Vagina (tissue), 2 donors: ENCODE measurements at regions of chr1 and their contacts with region 1.

Region 1: GRCh38 chr1:19450811-19451515 is 34.4 kb downstream of the CAPZB start:
- DNase-seq: no peak
- H3K4me3 ChIP-seq: no peak overlapping the region
- H3K27ac ChIP-seq: peak overlapping the region; percentile 86
- H3K4me1 ChIP-seq: peaks cover 96% of the 10 kb centered on the region
- H3K27me3 ChIP-seq: no peaks in the 10 kb centered on the region
- CTCF ChIP-seq: no peak
- POLR2A ChIP-seq: no peak

Region 2: DNA sequence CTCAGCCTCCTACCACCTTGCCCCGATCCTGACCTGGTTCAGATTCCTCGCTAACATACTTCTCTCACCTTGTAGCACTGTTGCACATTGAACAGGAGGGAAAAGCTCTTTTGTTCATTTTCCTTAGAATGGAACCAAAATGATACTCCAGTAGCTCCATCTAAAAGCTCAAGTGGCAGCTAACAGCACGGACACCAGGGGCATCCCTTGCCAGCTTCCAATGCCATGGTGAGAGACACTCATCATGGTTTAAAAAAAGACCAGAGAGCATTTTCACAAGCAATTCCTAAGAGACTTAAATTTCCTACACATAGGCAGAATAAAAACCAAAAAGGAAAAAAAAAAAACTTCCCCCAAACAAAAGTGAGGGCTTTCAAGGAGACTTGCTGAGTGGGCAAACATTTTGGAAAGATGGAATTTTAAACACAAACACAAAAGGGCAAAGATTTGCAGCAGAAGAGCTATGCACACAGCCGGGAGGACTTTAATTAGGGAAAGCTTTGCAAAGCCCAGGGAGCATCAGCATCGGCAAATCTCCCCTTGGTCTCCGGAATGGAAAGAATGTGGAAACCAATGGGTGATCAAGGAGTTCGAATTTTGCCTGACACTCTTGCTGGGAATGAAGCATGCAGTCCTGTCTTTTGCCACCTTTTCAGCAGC is 50.0 kb before region 1 on chr1:
- intact Hi-C with region 1: loop called (anchors 5 kb)
- DNase-seq: no peak
- H3K4me3 ChIP-seq: no peak overlapping the region
- H3K27ac ChIP-seq: peak overlapping the region; percentile 78
- H3K4me1 ChIP-seq: peaks cover 82% of the 10 kb centered on the region
- H3K27me3 ChIP-seq: no peaks in the 10 kb centered on the region
- CTCF ChIP-seq: no peak
- POLR2A ChIP-seq: no peak

Region 3: DNA sequence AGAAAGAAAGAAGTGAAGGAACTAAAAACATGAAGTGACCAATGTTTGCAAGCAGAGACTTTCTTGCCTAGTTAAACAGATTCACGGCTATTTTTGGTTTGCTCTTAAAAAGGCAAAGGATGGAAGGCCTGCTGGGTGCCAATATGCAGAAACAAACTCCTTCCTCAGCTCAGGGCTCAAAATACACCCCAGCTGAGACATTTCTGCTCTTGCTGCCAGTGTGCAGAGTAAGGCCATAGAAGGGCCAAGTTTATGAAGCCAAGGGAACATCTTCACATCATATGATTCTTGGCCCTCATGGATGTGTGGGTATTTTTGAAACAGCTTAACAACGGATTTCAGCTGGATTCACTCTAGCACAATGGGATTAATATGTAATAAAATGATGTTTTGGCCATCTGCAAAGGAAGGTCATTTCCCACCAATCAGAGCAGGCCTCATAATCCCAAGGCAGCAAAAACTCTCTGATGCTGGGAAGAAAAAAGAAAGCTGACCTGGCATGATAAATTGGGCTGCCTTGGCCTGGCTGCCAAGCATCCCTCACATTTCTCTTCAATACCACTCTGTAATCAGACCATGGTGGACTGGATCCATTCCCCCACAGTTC is 36.3 kb before region 1 on chr1:
- intact Hi-C with region 1: no loop called
- DNase-seq: no peak
- H3K4me3 ChIP-seq: no peak overlapping the region
- H3K27ac ChIP-seq: peak overlapping the region; percentile 91
- H3K4me1 ChIP-seq: peaks cover 89% of the 10 kb centered on the region
- H3K27me3 ChIP-seq: no peaks in the 10 kb centered on the region
- CTCF ChIP-seq: no peak
- POLR2A ChIP-seq: no peak

Region 4: DNA sequence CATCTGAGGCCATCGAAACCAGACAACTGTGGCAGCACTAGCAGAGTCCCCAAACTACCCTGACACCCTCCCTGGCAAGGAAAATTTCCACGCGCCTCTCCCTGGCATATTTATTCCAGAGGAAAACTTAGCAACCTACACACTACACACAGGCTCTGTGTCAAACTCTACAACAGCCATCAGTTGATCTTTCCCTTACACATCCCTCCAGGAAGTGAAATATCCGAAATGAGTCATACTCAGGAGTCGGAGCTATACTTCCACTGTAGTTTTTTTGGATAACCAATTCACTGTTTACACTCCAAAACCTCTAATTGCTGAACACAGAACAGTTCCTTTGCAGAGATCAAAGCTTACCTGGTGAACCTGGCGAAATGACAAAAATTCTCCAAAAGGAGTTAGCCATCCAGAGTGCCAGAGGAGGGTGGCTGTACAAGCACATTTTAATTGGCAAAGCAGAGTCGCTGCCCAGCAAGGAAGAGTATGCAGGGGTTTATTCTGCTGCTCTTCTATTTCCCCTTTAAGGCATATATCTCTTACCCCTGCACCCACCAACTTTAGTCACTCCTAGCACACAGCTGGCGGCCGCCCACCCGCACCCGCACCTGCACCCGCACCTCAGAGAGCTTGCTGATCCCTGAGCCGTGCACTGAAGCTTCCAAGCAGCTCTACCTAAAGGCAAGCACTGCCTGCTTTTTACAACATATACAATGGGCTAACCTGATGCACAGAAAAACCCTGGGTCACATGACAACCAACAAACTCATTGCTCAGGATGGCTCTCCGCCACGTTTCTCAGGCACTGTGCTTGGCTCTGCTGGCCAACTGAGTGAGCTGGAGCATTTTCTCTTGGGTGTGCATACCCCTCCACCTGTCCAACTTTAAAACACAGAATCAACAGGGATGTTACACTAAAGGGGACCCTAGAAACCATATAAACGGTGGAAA is 20.6 kb before region 1 on chr1:
- intact Hi-C with region 1: no loop called
- DNase-seq: no peak
- H3K4me3 ChIP-seq: no peak overlapping the region
- H3K27ac ChIP-seq: peak overlapping the region; percentile 86
- H3K4me1 ChIP-seq: peaks cover 96% of the 10 kb centered on the region
- H3K27me3 ChIP-seq: no peaks in the 10 kb centered on the region
- CTCF ChIP-seq: no peak
- POLR2A ChIP-seq: no peak